Activated CD8-positive, alpha-beta T cell treated with anti-CD3 and anti-CD28 coated beads for 36 hours (primary cell): ENCODE measurements at regions of chr12 and their contacts with region 1.

Region 1: DNA sequence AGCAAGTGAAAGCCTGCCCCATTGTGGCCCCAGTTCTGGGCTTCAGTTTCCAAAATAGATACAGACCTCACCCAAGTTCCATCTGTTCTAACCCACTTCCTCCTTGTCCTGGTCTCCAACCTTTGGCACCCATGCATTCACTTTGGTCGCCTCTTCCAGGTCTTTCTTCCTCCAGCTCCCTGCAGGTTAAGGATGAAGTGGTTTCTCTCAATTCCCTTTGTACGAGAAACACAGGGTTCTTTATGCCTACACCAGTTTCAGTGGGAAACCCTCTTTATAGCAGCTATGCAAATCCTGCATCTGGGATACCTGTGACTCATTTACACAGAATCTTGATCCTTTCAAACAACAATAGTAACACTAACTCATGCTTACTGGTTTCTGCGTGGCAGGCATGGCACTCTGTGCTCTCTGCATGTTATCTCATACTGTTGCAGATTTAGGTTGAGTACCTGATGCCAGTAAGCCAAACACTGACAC is 110.6 kb upstream of the AMIGO2 start:
- DNase-seq: peak; percentile 62
- ATAC-seq: peak; percentile 71
- H3K4me3 Mint-ChIP-seq: peak overlapping the region; percentile 57
- H3K27ac Mint-ChIP-seq: peak overlapping the region; percentile 95
- H3K4me1 Mint-ChIP-seq: peaks cover 84% of the 10 kb centered on the region
- H3K27me3 Mint-ChIP-seq: no peaks in the 10 kb centered on the region
- CTCF ChIP-seq: no peak

Region 2: DNA sequence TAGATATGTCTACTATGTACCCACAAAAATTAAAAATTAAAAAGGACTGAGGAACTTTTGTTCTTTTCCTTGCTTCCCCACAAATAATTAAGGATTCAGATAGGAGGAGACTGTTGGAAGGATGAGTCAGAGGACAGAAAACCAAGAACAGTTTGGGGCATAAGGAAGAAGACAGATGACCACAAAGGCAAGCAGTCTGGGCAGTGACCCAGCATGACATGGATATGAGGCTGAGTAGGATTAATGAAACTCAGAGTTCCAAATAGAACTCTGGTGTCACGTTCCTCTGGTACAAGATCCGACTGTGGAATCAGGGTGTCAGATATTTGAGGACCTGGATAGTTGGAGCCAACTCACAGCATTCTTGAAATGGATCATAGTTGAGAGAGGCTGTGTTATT is 275.2 kb before region 1 on chr12:
- CTCF ChIA-PET with region 1: no interaction called
- POLR2A ChIA-PET with region 1: no interaction called
- intact Hi-C with region 1: no loop called
- DNase-seq: no peak
- ATAC-seq: no peak
- H3K4me3 Mint-ChIP-seq: no peak overlapping the region
- H3K27ac Mint-ChIP-seq: no peak overlapping the region
- H3K4me1 Mint-ChIP-seq: no peaks in the 10 kb centered on the region
- H3K27me3 Mint-ChIP-seq: peaks cover 7% of the 10 kb centered on the region
- CTCF ChIP-seq: no peak

Region 3: GRCh38 chr12:47079468-47079980 is 110.8 kb before region 1 on chr12 and contains the starts of genes AMIGO2 and PCED1B:
- CTCF ChIA-PET with region 1: interaction called, 10 read pairs
- POLR2A ChIA-PET with region 1: interaction called, 4 read pairs
- intact Hi-C with region 1: loop called (anchors 5 kb)
- DNase-seq: peak; percentile 82
- ATAC-seq: peak; percentile 57
- H3K4me3 Mint-ChIP-seq: peak within 1 kb of the TSS; percentile 92
- H3K27ac Mint-ChIP-seq: peak within 1 kb of the TSS; percentile 97
- H3K4me1 Mint-ChIP-seq: peaks cover 72% of the 10 kb centered on the region
- H3K27me3 Mint-ChIP-seq: no peaks in the 10 kb centered on the region
- CTCF ChIP-seq: no peak
- total RNA-seq, gene AMIGO2: 12.1 to 12.5 TPM
- total RNA-seq, gene PCED1B: 117 to 119 TPM

Region 4: GRCh38 chr12:47202176-47202575 is 11.9 kb after region 1 on chr12:
- CTCF ChIA-PET with region 1: interaction called, 20 read pairs
- POLR2A ChIA-PET with region 1: interaction called, 68 read pairs
- intact Hi-C with region 1: no loop called
- DNase-seq: no peak
- ATAC-seq: no peak
- H3K4me3 Mint-ChIP-seq: no peak overlapping the region
- H3K27ac Mint-ChIP-seq: peak overlapping the region; percentile 57
- H3K4me1 Mint-ChIP-seq: peaks cover 78% of the 10 kb centered on the region
- H3K27me3 Mint-ChIP-seq: no peaks in the 10 kb centered on the region
- CTCF ChIP-seq: no peak

Region 5: DNA sequence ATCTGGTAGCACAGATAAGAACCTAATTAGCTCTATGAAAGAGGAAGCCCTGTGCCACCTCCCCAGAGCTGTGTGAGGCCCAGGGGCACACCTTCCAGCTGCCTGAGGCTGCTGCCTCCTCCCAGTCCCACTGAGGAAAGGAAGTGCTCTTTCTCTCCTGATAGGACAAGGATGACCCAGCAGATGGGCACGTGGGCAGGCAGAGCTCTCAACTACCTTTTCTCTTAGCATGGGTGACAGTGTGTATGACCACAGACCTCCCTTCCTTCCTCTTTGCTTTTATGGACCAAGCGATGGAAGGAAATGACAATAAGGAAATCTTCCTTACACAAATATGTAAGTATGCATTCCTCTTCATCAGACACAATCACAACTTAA is 17.0 kb after region 1 on chr12:
- CTCF ChIA-PET with region 1: interaction called, 20 read pairs
- POLR2A ChIA-PET with region 1: interaction called, 68 read pairs
- intact Hi-C with region 1: no loop called
- DNase-seq: peak; percentile 76
- ATAC-seq: peak; percentile 60
- H3K4me3 Mint-ChIP-seq: peak overlapping the region; percentile 79
- H3K27ac Mint-ChIP-seq: peak overlapping the region; percentile 96
- H3K4me1 Mint-ChIP-seq: peaks cover 69% of the 10 kb centered on the region
- H3K27me3 Mint-ChIP-seq: no peaks in the 10 kb centered on the region
- CTCF ChIP-seq: no peak

Region 6: GRCh38 chr12:47216150-47216677 is 25.9 kb after region 1 on chr12:
- CTCF ChIA-PET with region 1: interaction called, 6 read pairs
- POLR2A ChIA-PET with region 1: interaction called, 68 read pairs
- intact Hi-C with region 1: no loop called
- DNase-seq: peak; percentile 87
- ATAC-seq: peak; percentile 52
- H3K4me3 Mint-ChIP-seq: peak overlapping the region; percentile 79
- H3K27ac Mint-ChIP-seq: peak overlapping the region; percentile 96
- H3K4me1 Mint-ChIP-seq: peaks cover 10% of the 10 kb centered on the region
- H3K27me3 Mint-ChIP-seq: no peaks in the 10 kb centered on the region
- CTCF ChIP-seq: no peak